ENCODE measurements at regions of chr1 and their contacts with region 1.

Region 1: GRCh38 chr1:34460193-34460592 is 283.5 kb downstream of the C1orf94 start:
- DNase-seq: peak; percentile 48 to 62 (median 56)
- ATAC-seq: no peak; the same call in 2 of the 3 replicates
- H3K4me3 ChIP-seq: no peak overlapping the region
- H3K27ac ChIP-seq: no peak overlapping the region
- H3K4me1 ChIP-seq: no peaks in the 10 kb centered on the region
- H3K27me3 ChIP-seq: no peaks in the 10 kb centered on the region
- CTCF ChIP-seq: peak; percentile 50 to 74 (median 57)
- EP300 ChIP-seq: no peak
- POLR2A ChIP-seq: no peak
- RAD21 ChIP-seq: peak; percentile 35 to 55; a peak in 3 of 4 replicates

Region 2: GRCh38 chr1:34597877-34598514 is 137.8 kb after region 1 on chr1:
- CTCF ChIA-PET with region 1: no interaction called
- POLR2A ChIA-PET with region 1: no interaction called
- in situ Hi-C with region 1: no loop called
- intact Hi-C with region 1: loop called (anchors 5 kb)
- DNase-seq: peak; percentile 72 to 78 (median 76)
- ATAC-seq: peak; percentile 95
- H3K4me3 ChIP-seq: no peak overlapping the region
- H3K27ac ChIP-seq: no peak overlapping the region
- H3K4me1 ChIP-seq: no peaks in the 10 kb centered on the region
- H3K27me3 ChIP-seq: no peaks in the 10 kb centered on the region
- CTCF ChIP-seq: peak; percentile 91 to 94 (median 93)
- EP300 ChIP-seq: no peak
- POLR2A ChIP-seq: no peak
- RAD21 ChIP-seq: peak; percentile 61 to 88

Region 3: DNA sequence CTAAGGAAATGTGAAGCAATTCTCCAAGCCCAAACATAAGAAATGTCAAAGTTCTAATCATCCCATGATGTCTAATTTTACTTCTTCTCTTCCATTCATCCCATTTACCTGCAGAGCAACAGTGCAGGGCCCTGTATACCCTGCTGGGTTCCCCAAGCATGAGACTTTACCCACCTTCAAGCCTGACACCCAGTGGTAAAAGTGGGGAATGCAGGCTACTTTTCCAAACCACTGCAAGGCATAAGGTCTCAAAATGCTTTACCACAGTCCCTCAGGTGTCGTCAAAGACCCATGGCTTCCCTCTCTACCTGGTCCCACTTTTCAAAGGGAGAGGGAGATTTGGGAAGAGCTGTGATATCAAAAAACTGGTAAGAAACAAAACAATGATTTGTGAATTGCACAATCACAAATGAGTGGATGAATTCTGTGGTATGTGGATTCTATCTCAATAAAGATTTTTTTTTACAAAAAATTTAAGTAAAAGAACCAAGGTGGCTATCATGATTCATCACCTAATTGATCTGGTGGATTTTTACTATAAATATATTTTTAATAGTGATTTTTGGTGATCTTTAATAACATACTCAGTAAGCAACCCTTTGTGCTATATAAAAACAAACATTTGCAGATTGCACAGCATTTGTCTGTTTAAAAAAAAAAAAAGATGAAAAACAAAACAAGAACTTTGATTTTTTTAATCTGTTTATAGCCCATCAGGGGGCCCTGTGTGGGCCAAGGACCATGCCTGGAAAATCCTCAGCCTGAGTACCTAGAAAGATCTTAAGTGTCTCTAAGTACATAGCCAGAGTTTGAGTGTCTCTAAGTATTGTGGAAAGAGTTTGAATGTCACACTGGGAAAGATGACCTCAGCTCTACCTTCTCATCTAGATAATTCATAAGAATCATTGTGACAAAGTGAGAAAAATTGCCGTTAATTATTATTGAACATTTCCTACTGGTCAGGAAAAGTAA is 221.6 kb after region 1 on chr1:
- CTCF ChIA-PET with region 1: interaction called, 4 read pairs
- POLR2A ChIA-PET with region 1: no interaction called
- in situ Hi-C with region 1: no loop called
- intact Hi-C with region 1: loop called (anchors 5 kb)
- DNase-seq: peak; percentile 63 to 82 (median 74)
- ATAC-seq: peak; percentile 95
- H3K4me3 ChIP-seq: no peak overlapping the region
- H3K27ac ChIP-seq: no peak overlapping the region
- H3K4me1 ChIP-seq: no peaks in the 10 kb centered on the region
- H3K27me3 ChIP-seq: no peaks in the 10 kb centered on the region
- CTCF ChIP-seq: peak; percentile 75 to 84 (median 79)
- EP300 ChIP-seq: no peak
- POLR2A ChIP-seq: no peak
- RAD21 ChIP-seq: peak; percentile 76

Region 4: DNA sequence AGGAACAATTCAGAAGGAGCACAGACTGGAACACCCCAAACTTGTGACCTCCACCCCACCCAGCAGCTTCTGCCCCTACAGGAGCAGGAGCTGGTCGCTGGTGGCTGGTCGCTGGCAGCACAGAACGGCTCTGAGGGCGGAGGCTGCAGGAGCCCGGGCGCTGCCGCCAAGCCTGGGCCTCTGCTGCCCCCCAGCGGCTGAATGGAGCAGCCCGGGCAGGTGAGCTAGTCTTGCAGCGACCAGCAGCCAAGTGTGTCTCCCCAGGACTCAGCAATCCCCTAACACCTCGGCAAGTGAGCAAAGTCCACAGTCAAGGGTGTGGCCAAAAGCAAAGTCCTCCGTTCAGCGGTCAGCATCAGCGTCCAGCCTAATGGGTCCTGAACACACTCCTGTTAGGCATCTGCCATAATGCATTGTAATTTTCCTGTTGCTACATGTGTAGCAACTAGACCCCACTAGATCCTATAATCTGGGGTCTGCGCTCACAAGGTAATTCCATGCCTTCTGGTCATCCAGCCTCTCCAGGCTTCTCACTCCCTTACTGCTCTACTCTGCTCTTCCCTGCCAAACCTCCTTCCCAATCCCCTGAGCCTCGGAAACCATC is 282.6 kb after region 1 on chr1:
- CTCF ChIA-PET with region 1: interaction called, 3 read pairs
- POLR2A ChIA-PET with region 1: no interaction called
- in situ Hi-C with region 1: no loop called
- intact Hi-C with region 1: loop called (anchors 5 kb)
- DNase-seq: peak; percentile 85 to 95 (median 91)
- ATAC-seq: peak; percentile 99
- H3K4me3 ChIP-seq: no peak overlapping the region
- H3K27ac ChIP-seq: no peak overlapping the region
- H3K4me1 ChIP-seq: no peaks in the 10 kb centered on the region
- H3K27me3 ChIP-seq: peaks cover 8 to 43% of the 10 kb centered on the region in 2 experiments; a peak in 4 of 5 replicates
- CTCF ChIP-seq: peak; percentile 95 to 96 (median 96)
- EP300 ChIP-seq: no peak
- POLR2A ChIP-seq: no peak
- RAD21 ChIP-seq: peak; percentile 82 to 94